Activated CD8-positive, alpha-beta memory T cell treated with anti-CD3 and anti-CD28 coated beads, Interleukin-2, amount 10 ng/mL, durations not matched to agents 7 days and 5 days (primary cell): ENCODE measurements at regions of chr17 and their contacts with region 1.

Region 1: GRCh38 chr17:47615766-47616424 is 33.8 kb upstream of the KPNB1 start:
- DNase-seq: no peak
- ATAC-seq: peak; percentile 64
- H3K4me3 Mint-ChIP-seq: no peak overlapping the region
- H3K27ac Mint-ChIP-seq: no peak overlapping the region
- H3K4me1 Mint-ChIP-seq: peaks cover 16% of the 10 kb centered on the region
- H3K27me3 Mint-ChIP-seq: no peaks in the 10 kb centered on the region

Region 2: GRCh38 chr17:47323382-47324222 is 292.3 kb before region 1 on chr17 and contains the start of gene EFCAB13:
- CTCF ChIA-PET with region 1: interaction called, 14 read pairs
- DNase-seq: peak; percentile 87
- ATAC-seq: peak; percentile 91
- H3K4me3 Mint-ChIP-seq: peak within 1 kb of the TSS; percentile 98
- H3K27ac Mint-ChIP-seq: peak within 1 kb of the TSS; percentile 94
- H3K4me1 Mint-ChIP-seq: peaks cover 15% of the 10 kb centered on the region
- H3K27me3 Mint-ChIP-seq: peaks cover 23% of the 10 kb centered on the region
- total RNA-seq, gene EFCAB13: 5.9 to 9.1 TPM

Region 3: DNA sequence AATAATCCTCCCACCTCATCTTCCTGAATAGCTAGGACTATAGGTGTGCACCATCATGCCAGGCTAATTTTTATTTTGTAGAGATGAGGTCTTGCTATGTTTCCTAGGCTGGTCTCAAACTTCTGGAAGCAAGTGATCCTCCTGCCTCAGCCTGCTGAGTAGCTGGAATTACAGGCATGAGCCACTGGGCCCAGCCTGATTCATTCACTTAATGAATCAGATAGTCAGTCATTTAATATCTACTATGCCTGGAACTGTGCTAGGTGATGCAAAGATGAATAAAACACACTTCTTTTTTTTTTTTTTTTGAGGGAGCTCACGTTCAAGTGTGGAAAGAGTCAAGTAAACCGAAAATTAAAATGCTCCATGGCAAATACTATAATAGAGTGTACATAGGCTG is 252.7 kb before region 1 on chr17:
- CTCF ChIA-PET with region 1: interaction called, 17 read pairs
- DNase-seq: no peak
- ATAC-seq: no peak
- H3K4me3 Mint-ChIP-seq: no peak overlapping the region
- H3K27ac Mint-ChIP-seq: no peak overlapping the region
- H3K4me1 Mint-ChIP-seq: no peaks in the 10 kb centered on the region
- H3K27me3 Mint-ChIP-seq: no peaks in the 10 kb centered on the region

Region 4: DNA sequence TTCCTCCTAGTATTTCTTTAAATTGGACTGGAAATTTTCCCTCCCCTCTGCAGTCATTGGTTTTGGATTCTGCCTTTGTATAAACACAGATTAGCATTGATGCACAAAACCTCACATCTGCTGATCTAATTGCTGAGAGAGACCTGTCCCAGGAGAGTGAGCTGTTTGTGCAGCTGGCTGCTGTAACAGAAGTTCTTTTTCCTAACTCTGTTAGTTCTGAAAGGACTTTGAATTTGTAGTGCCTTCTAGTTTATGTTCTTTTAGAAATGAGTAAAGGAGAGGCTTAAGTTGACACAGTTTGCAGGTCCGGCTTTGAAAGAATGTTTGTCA is 11.3 kb before region 1 on chr17:
- CTCF ChIA-PET with region 1: interaction called, 17 read pairs
- DNase-seq: no peak
- ATAC-seq: no peak
- H3K4me3 Mint-ChIP-seq: no peak overlapping the region
- H3K27ac Mint-ChIP-seq: peak overlapping the region; percentile 31
- H3K4me1 Mint-ChIP-seq: peaks cover 5% of the 10 kb centered on the region
- H3K27me3 Mint-ChIP-seq: no peaks in the 10 kb centered on the region

Region 5: GRCh38 chr17:47643116-47643515 is 27.2 kb after region 1 on chr17:
- CTCF ChIA-PET with region 1: interaction called, 10 read pairs
- DNase-seq: no peak
- ATAC-seq: no peak
- H3K4me3 Mint-ChIP-seq: no peak overlapping the region
- H3K27ac Mint-ChIP-seq: no peak overlapping the region
- H3K4me1 Mint-ChIP-seq: peaks cover 6% of the 10 kb centered on the region
- H3K27me3 Mint-ChIP-seq: no peaks in the 10 kb centered on the region

Region 6: DNA sequence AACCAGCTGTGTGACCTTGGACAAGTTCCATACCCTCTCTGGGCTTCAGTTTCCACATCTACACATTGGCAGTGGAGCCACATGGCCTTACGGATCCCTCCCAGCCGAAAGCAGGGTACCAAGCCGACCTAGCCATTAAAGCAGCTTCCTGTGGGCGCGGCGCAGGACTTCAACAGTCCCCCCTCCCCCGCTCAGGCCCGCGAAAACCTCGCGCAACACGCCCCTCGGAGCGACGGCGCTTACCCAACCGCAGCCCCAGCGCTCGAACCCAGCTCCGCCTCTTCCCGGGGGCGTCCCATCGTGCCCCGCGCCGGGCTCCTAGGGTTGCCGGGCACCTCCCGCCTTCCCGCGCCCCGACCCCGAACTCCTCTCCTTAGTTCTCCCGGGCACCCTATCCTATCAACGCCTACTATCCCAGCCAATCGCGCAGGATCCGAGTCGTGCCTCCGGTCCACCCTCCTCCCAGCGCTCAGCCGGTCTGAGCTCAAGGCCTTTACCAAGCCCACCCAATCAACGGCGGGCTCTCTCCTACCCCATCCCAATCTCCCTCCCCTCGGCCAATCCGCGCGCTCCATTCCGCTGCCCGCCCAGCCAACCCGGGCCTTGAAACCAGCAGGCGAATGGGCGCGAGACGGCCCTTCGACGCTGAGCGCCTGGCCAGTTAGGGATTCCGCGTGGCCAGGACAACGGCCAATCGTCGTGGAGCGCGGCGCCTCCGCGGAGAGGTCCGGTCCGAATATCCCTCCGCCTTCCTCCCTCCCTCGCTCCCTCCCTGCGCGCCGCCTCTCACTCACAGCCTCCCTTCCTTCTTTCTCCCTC is 33.5 kb after region 1 on chr17 and contains the start of gene KPNB1:
- CTCF ChIA-PET with region 1: interaction called, 12 read pairs
- DNase-seq: peak; percentile 100
- ATAC-seq: peak; percentile 87
- H3K4me3 Mint-ChIP-seq: peak within 1 kb of the TSS; percentile 99
- H3K27ac Mint-ChIP-seq: peak within 1 kb of the TSS; percentile 100
- H3K4me1 Mint-ChIP-seq: peaks cover 38% of the 10 kb centered on the region
- H3K27me3 Mint-ChIP-seq: no peaks in the 10 kb centered on the region
- total RNA-seq, gene KPNB1: 413 to 525 TPM

Region 7: GRCh38 chr17:47720754-47721533 is 105.0 kb after region 1 on chr17:
- CTCF ChIA-PET with region 1: no interaction called
- DNase-seq: peak; percentile 97
- ATAC-seq: peak; percentile 80
- H3K4me3 Mint-ChIP-seq: peak overlapping the region; percentile 69
- H3K27ac Mint-ChIP-seq: peak overlapping the region; percentile 90
- H3K4me1 Mint-ChIP-seq: peaks cover 81% of the 10 kb centered on the region
- H3K27me3 Mint-ChIP-seq: peaks cover 2% of the 10 kb centered on the region